ENCODE measurements at regions of chr9 and their contacts with region 1.

Region 1: DNA sequence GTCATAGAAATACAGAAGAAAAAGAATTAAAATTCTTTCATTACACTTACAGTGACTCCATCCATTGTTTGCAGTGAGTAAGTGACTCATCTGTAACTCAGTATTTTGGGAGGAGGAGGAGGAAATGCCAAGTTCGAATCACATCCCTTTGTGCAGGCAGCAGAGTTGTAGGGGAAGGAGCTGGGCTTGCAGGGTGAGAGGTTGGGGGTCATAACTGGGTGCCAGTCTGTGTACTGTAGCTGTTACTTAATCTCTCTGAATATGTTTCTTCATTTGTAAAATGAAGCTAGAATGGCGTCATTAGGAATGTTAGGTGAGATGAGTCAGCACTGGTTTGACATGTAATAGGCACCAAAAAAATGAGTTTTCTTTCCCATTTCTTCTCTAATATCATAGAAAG is 235.7 kb upstream of the ADAMTSL1 start:
- DNase-seq: peak; percentile 93
- H3K4me3 Mint-ChIP-seq: peak overlapping the region; percentile 55
- H3K27ac Mint-ChIP-seq: peak overlapping the region; percentile 88
- H3K4me1 Mint-ChIP-seq: peaks cover 33% of the 10 kb centered on the region
- H3K27me3 Mint-ChIP-seq: no peaks in the 10 kb centered on the region
- CTCF ChIP-seq: no peak

Region 2: GRCh38 chr9:18274693-18275092 is 36.4 kb after region 1 on chr9:
- CTCF ChIA-PET with region 1: no interaction called
- POLR2A ChIA-PET with region 1: no interaction called
- intact Hi-C with region 1: loop called (anchors 2 kb)
- DNase-seq: peak; percentile 66
- H3K4me3 Mint-ChIP-seq: peak overlapping the region; percentile 12
- H3K27ac Mint-ChIP-seq: peak overlapping the region; percentile 76
- H3K4me1 Mint-ChIP-seq: peaks cover 10% of the 10 kb centered on the region
- H3K27me3 Mint-ChIP-seq: no peaks in the 10 kb centered on the region
- CTCF ChIP-seq: no peak

Region 3: GRCh38 chr9:18371621-18372020 is 133.4 kb after region 1 on chr9:
- CTCF ChIA-PET with region 1: no interaction called
- POLR2A ChIA-PET with region 1: no interaction called
- intact Hi-C with region 1: no loop called
- DNase-seq: no peak
- H3K4me3 Mint-ChIP-seq: no peak overlapping the region
- H3K27ac Mint-ChIP-seq: no peak overlapping the region
- H3K4me1 Mint-ChIP-seq: no peaks in the 10 kb centered on the region
- H3K27me3 Mint-ChIP-seq: no peaks in the 10 kb centered on the region
- CTCF ChIP-seq: no peak

Region 4: GRCh38 chr9:18721267-18721994 is 483.2 kb after region 1 on chr9:
- CTCF ChIA-PET with region 1: no interaction called
- POLR2A ChIA-PET with region 1: no interaction called
- intact Hi-C with region 1: no loop called
- DNase-seq: no peak
- H3K4me3 Mint-ChIP-seq: no peak overlapping the region
- H3K27ac Mint-ChIP-seq: no peak overlapping the region
- H3K4me1 Mint-ChIP-seq: no peaks in the 10 kb centered on the region
- H3K27me3 Mint-ChIP-seq: no peaks in the 10 kb centered on the region
- CTCF ChIP-seq: no peak

Measured in MCF 10A (cell line).